ENCODE measurements at regions of chr5 and their contacts with region 1.

Region 1: GRCh38 chr5:37248970-37249686 is at the start of gene CPLANE1:
- DNase-seq: peak; percentile 78
- ATAC-seq: peak; percentile 87
- H3K4me3 ChIP-seq: peak within 1 kb of the TSS; percentile 75 to 88 (median 80)
- H3K4me3 Mint-ChIP-seq: peak within 1 kb of the TSS; percentile 95
- H3K27ac ChIP-seq: peak within 1 kb of the TSS; percentile 65 to 90
- H3K27ac Mint-ChIP-seq: peak within 1 kb of the TSS; percentile 92
- H3K4me1 ChIP-seq: peaks cover 0 to 11% of the 10 kb centered on the region in 2 donors
- H3K4me1 Mint-ChIP-seq: peaks cover 11% of the 10 kb centered on the region
- H3K27me3 ChIP-seq: no peaks in the 10 kb centered on the region
- H3K27me3 Mint-ChIP-seq: no peaks in the 10 kb centered on the region
- CTCF ChIP-seq: no peak
- total RNA-seq, gene CPLANE1: 17.9 and 21.1 TPM in 2 replicates

Region 2: GRCh38 chr5:37184748-37185364 is 64.3 kb before region 1 on chr5:
- CTCF ChIA-PET with region 1: no interaction called
- POLR2A ChIA-PET with region 1: no interaction called
- intact Hi-C with region 1: loop called (anchors 10 kb)
- DNase-seq: peak; percentile 78
- ATAC-seq: peak; percentile 97
- H3K4me3 ChIP-seq: no peak overlapping the region
- H3K4me3 Mint-ChIP-seq: no peak overlapping the region
- H3K27ac ChIP-seq: peak overlapping the region in 1 of 2 donors; percentile 10
- H3K27ac Mint-ChIP-seq: no peak overlapping the region
- H3K4me1 ChIP-seq: peaks cover 7 to 11% of the 10 kb centered on the region in 2 donors
- H3K4me1 Mint-ChIP-seq: peaks cover 15% of the 10 kb centered on the region
- H3K27me3 ChIP-seq: no peaks in the 10 kb centered on the region
- H3K27me3 Mint-ChIP-seq: no peaks in the 10 kb centered on the region
- CTCF ChIP-seq: no peak

Region 3: DNA sequence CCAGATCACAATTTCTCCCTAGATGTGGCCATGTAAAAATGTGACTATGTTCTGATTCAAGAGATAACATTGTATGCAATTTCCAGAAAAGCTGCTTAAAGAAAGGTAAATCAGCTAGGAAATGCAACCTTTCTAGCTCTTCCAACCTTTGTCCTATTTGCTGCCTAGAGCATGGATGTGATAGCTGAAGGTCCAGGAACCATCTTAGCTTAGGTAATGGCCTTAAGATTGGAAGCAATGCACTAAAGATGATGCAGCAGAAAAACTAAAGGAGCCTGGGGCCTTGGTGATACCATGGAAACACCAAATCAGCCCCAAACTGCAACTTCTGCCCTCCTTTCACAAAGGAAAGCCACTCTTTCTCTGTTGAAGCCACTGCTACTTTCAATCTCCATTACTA is 27.0 kb before region 1 on chr5:
- CTCF ChIA-PET with region 1: no interaction called
- POLR2A ChIA-PET with region 1: interaction called, 13 read pairs
- intact Hi-C with region 1: no loop called
- DNase-seq: no peak
- ATAC-seq: no peak
- H3K4me3 ChIP-seq: no peak overlapping the region
- H3K4me3 Mint-ChIP-seq: no peak overlapping the region
- H3K27ac ChIP-seq: no peak overlapping the region
- H3K27ac Mint-ChIP-seq: no peak overlapping the region
- H3K4me1 ChIP-seq: no peaks in the 10 kb centered on the region
- H3K4me1 Mint-ChIP-seq: no peaks in the 10 kb centered on the region
- H3K27me3 ChIP-seq: no peaks in the 10 kb centered on the region
- H3K27me3 Mint-ChIP-seq: no peaks in the 10 kb centered on the region
- CTCF ChIP-seq: no peak

Region 4: GRCh38 chr5:37370864-37371726 is 122.0 kb after region 1 on chr5 and contains the start of gene NUP155:
- CTCF ChIA-PET with region 1: no interaction called
- POLR2A ChIA-PET with region 1: no interaction called
- intact Hi-C with region 1: loop called (anchors 5 kb)
- DNase-seq: peak; percentile 93
- ATAC-seq: peak; percentile 94
- H3K4me3 ChIP-seq: peak within 1 kb of the TSS; percentile 71 to 95 (median 94)
- H3K4me3 Mint-ChIP-seq: peak within 1 kb of the TSS; percentile 96
- H3K27ac ChIP-seq: peak within 1 kb of the TSS; percentile 83 to 92
- H3K27ac Mint-ChIP-seq: peak within 1 kb of the TSS; percentile 94
- H3K4me1 ChIP-seq: peaks cover 24% of the 10 kb centered on the region in 2 donors
- H3K4me1 Mint-ChIP-seq: peaks cover 30% of the 10 kb centered on the region
- H3K27me3 ChIP-seq: no peaks in the 10 kb centered on the region
- H3K27me3 Mint-ChIP-seq: no peaks in the 10 kb centered on the region
- CTCF ChIP-seq: no peak
- total RNA-seq, gene NUP155: 33.8 and 34.1 TPM in 2 replicates

Measured in B cell (primary cell).